Right cardiac atrium (tissue), 5 donors: ENCODE measurements at regions of chr5 and their contacts with region 1.

Region 1: DNA sequence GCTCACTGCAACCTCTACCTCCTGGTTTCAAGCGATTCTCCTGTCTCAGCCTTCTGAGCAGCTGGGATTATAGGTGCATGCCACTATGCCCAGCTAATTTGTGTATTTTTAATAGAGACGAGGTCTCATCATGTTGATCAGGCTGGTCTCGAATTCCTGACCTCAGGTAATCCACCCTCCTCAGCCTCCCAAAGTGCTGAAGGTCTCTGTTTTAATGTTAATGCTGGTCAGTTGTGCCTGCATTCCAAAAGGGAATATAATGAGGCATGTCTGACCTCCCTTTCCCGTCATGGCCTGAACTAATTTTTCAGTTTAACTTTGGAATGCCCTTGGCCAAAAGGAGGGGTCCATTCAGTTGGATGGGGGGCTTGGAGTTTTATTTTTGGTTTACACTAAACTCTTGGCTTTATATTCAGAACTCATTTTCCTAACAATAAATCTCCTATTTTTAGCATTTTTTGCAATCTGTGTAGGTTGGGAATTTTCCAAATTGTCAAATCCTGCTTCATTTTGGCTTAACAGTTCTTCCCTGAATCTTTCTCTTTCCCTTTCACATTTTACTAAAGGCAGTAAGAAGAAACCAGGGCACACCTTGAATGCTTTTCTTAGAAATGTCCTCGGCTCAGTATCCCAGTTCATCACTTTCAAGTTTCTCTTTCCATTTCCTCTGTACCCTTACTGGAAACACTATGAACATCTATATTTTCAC is 1175.5 kb downstream of the MAT2B start:
- DNase-seq: no peak
- ATAC-seq: no peak
- H3K4me3 ChIP-seq: no peak overlapping the region
- H3K27ac ChIP-seq: no peak overlapping the region
- H3K4me1 ChIP-seq: no peaks in the 10 kb centered on the region
- H3K27me3 ChIP-seq: no peaks in the 10 kb centered on the region

Region 2: DNA sequence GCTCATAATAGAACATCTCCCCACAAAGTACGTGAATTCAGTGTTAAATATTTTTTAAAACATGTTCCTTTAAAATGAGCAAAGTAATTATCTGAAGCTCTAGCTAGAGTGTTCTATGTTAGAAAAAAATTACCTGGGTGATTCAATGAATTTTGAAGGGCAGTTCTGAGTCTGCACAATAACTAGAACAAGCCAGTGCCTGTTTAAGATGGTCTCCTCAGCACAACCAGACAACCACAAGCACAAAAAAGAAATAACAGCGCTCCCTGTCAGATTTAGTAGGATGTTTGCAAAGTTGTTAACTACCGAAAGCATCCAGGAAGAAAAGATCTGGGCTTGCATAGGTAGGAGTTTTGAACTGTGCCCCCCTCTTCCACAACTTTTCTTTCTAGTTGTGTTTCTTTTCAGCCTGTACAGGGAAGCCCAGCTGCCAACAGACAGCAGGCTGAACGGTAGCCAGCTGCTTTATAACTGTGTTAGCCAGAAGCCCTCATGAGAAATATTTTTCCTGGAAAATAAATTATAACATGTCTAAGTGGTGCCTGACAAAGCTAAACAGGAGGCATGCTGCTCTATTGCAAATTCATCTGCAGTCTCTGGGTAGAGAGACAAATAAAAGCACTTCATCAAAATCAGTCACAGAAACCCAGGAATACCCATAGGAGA is 148.6 kb before region 1 on chr5:
- intact Hi-C with region 1: no loop called
- DNase-seq: peak in 1 of 3 donors; percentile 68
- ATAC-seq: peak in 1 of 2 donors; percentile 57
- H3K4me3 ChIP-seq: no peak overlapping the region
- H3K27ac ChIP-seq: no peak overlapping the region
- H3K4me1 ChIP-seq: no peaks in the 10 kb centered on the region
- H3K27me3 ChIP-seq: no peaks in the 10 kb centered on the region

Region 3: DNA sequence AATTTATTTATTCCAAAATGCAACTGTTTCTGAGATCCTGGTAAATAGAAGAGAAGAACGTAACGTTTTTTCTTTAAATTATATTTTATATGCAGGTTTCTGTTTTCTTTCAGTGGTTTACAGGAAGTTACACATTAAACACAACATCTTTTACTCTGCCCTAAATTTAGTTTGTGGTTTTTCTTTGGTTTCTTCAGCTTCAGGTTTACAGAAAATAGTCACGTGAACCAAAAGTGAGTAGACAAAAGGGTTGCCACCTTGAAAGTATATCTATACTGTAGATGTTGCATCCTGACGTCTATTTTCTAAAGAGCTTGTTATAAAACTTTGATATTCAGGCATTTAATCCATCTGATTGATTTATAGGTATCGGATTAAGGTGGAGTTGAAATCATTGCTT is 61.1 kb after region 1 on chr5:
- intact Hi-C with region 1: loop called in 1 of 4 experiments (anchors 10 kb)
- DNase-seq: no peak
- ATAC-seq: no peak
- H3K4me3 ChIP-seq: no peak overlapping the region
- H3K27ac ChIP-seq: no peak overlapping the region
- H3K4me1 ChIP-seq: no peaks in the 10 kb centered on the region
- H3K27me3 ChIP-seq: no peaks in the 10 kb centered on the region